IMR-90 (cell line): ENCODE measurements at regions of chr19 and their contacts with region 1.

Region 1: DNA sequence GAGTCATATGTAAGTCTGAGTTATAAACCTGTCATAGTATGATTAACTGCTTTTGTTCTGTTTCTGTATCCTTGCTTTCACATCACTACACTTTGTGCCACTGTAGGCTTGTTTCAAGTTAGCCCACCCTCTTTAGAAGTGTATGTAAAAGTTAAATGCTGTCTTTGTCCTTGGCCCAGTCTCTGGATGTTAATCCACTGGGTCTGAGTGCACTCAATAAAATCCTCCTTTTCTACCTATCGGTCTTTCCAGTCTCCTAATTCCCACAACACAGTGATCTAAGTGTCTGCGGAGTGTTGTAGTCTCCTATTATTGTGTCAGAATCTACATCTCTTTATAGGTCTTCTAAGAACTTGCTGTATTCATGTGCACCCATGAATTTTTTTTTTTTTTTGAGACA is 14.1 kb downstream of the ZNF429 start:
- DNase-seq: no peak
- ATAC-seq: no peak
- H3K4me3 ChIP-seq: no peak overlapping the region
- H3K27ac ChIP-seq: no peak overlapping the region
- H3K4me1 ChIP-seq: no peaks in the 10 kb centered on the region
- H3K27me3 ChIP-seq: no peaks in the 10 kb centered on the region
- CTCF ChIP-seq: no peak
- POLR2A ChIP-seq: no peak
- RAD21 ChIP-seq: no peak

Region 2: GRCh38 chr19:21352830-21353229 is 166.7 kb before region 1 on chr19:
- CTCF ChIA-PET with region 1: no interaction called
- POLR2A ChIA-PET with region 1: no interaction called
- dilution Hi-C with region 1: no loop called
- in situ Hi-C with region 1: no loop called
- intact Hi-C with region 1: no loop called
- DNase-seq: no peak
- ATAC-seq: no peak
- H3K4me3 ChIP-seq: no peak overlapping the region
- H3K27ac ChIP-seq: no peak overlapping the region
- H3K4me1 ChIP-seq: no peaks in the 10 kb centered on the region
- H3K27me3 ChIP-seq: no peaks in the 10 kb centered on the region
- CTCF ChIP-seq: no peak
- POLR2A ChIP-seq: no peak
- RAD21 ChIP-seq: no peak

Region 3: DNA sequence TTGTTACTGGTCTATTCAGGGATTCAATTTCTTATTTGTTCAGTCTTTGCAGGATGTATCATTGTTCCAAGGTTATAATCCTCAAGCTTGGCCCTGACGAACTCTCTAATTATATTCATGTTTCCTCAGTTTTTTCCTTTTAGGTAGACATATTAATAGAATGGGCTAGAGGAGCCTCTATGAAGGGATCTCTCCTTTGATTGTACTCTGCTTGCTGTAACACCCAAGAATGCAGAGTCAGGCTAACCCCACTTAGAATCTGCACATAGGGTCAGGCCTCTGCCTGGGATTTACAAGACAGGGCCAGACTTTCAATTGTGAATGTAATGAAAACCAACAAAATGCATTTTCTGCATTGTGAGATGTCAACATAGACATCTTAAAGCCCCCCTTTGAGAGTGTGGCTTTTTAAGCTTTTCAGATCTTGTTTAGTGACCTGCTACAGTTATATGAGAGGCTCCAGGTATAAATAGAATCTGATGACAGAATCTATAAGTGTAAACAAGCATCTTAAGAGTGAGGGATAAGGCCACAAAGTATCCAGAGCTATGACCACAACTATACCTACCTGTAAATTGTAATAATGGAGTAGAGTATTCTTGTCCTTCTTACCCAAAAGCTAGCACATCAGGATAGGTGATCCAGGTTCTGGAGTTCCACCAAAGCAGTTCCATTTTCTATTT is 117.0 kb before region 1 on chr19:
- CTCF ChIA-PET with region 1: no interaction called
- POLR2A ChIA-PET with region 1: no interaction called
- dilution Hi-C with region 1: no loop called
- in situ Hi-C with region 1: no loop called
- intact Hi-C with region 1: no loop called
- DNase-seq: no peak
- ATAC-seq: no peak
- H3K4me3 ChIP-seq: no peak overlapping the region
- H3K27ac ChIP-seq: no peak overlapping the region
- H3K4me1 ChIP-seq: no peaks in the 10 kb centered on the region; the same call in 1 of the 2 replicates
- H3K27me3 ChIP-seq: no peaks in the 10 kb centered on the region
- CTCF ChIP-seq: no peak
- POLR2A ChIP-seq: no peak
- RAD21 ChIP-seq: no peak

Region 4: GRCh38 chr19:21474671-21475181 is 44.8 kb before region 1 on chr19:
- CTCF ChIA-PET with region 1: interaction called, 10 read pairs
- POLR2A ChIA-PET with region 1: no interaction called
- dilution Hi-C with region 1: no loop called
- in situ Hi-C with region 1: no loop called
- intact Hi-C with region 1: no loop called
- DNase-seq: peak; percentile 31
- ATAC-seq: peak; percentile 98
- H3K4me3 ChIP-seq: peak overlapping the region; percentile 67
- H3K27ac ChIP-seq: no peak overlapping the region; the same call in 1 of the 2 replicates
- H3K4me1 ChIP-seq: no peaks in the 10 kb centered on the region
- H3K27me3 ChIP-seq: no peaks in the 10 kb centered on the region
- CTCF ChIP-seq: no peak
- POLR2A ChIP-seq: no peak
- RAD21 ChIP-seq: no peak

Region 5: GRCh38 chr19:21505459-21506451 is 13.7 kb before region 1 on chr19 and contains the start of gene ZNF429:
- CTCF ChIA-PET with region 1: no interaction called
- POLR2A ChIA-PET with region 1: no interaction called
- dilution Hi-C with region 1: no loop called
- in situ Hi-C with region 1: no loop called
- intact Hi-C with region 1: no loop called
- DNase-seq: peak; percentile 92
- ATAC-seq: peak; percentile 99
- H3K4me3 ChIP-seq: peak within 1 kb of the TSS; percentile 74
- H3K27ac ChIP-seq: peak within 1 kb of the TSS; percentile 81
- H3K4me1 ChIP-seq: no peaks in the 10 kb centered on the region
- H3K27me3 ChIP-seq: no peaks in the 10 kb centered on the region
- CTCF ChIP-seq: 0 out of 2 replicates have a peak, but pooled peaks have one; percentile 5
- POLR2A ChIP-seq: peak; percentile 74
- RAD21 ChIP-seq: no peak
- total RNA-seq, gene ZNF429: 4.3 and 5.3 TPM in 2 replicates

Region 6: DNA sequence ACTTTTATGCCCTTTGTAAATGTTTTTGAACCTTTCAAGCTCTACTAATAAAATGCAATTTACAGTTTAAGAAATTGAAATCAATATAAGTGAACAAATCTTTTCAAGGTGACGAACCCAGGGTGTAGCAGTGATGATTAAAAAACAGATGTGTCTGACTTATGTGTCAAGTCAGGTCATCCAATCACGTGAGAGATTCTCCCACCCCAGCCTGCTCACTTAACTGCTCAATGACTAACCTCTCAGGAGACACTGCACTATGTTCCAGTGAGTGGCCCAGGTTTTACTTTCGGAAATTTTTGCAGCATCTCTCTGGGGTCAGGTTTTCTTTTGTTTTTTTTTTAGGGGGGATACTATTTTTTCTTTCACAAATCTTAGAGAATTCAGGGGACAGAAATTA is 46.6 kb after region 1 on chr19:
- CTCF ChIA-PET with region 1: no interaction called
- POLR2A ChIA-PET with region 1: no interaction called
- dilution Hi-C with region 1: no loop called
- in situ Hi-C with region 1: no loop called
- intact Hi-C with region 1: no loop called
- DNase-seq: no peak
- ATAC-seq: no peak
- H3K4me3 ChIP-seq: no peak overlapping the region
- H3K27ac ChIP-seq: no peak overlapping the region
- H3K4me1 ChIP-seq: no peaks in the 10 kb centered on the region
- H3K27me3 ChIP-seq: no peaks in the 10 kb centered on the region
- CTCF ChIP-seq: no peak
- POLR2A ChIP-seq: no peak
- RAD21 ChIP-seq: no peak